ENCODE measurements at regions of chr17 and their contacts with region 1.

Region 1: GRCh38 chr17:46851029-46851741 is at the start of gene WNT9B:
- DNase-seq: no peak
- ATAC-seq: peak in 6 of 8 donors; percentile 44 to 57 (median 54)
- H3K4me3 ChIP-seq: peak within 1 kb of the TSS; percentile 1 to 56 (median 43)
- H3K27ac ChIP-seq: no peak within 1 kb of the TSS
- H3K4me1 ChIP-seq: peaks cover 0 to 12% (median 6%) of the 10 kb centered on the region in 9 donors
- H3K27me3 ChIP-seq: peaks cover 9 to 72% (median 53%) of the 10 kb centered on the region in 7 donors
- CTCF ChIP-seq: peak in 2 of 9 donors; percentile 19 to 23
- total RNA-seq, gene WNT9B: 0.18 to 2.4 (median 0.35) TPM

Region 2: DNA sequence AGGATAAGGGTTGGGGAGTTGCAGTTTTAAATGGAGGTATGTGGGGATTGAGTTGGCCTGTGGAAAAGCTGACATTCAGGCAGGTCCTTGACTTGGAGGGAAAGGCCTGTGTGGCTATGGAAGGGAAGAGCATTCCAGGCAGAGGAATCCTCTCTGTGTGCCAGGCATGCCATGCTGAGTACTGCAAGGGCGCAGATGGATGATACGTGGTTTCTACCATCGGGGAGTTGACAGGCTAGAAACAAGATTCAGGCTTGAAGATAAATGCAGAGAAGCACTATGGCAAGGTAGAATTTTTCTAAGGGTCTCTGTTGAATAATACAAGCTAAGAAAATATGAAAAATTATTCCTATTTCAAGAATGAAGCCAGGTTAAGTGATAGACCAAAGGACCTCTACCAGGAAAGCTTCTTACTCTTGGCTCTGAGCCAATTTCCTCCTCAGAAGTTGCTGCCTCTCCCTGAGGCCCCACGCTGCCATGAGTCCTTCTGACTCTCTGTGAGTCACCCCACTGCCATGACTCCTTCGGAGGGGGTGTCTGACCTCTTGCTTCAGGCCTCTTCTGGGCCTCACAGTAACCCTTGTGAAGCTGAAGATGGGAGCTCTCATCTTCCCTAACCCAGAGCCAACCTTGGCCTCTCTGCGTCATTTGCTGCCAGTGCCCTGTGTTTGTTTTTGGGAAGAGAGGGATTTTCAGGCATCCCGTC is 108.5 kb before region 1 on chr17:
- intact Hi-C with region 1: no loop called
- DNase-seq: peak in 1 of 2 donors; percentile 26
- ATAC-seq: peak; percentile 55 to 98 (median 88)
- H3K4me3 ChIP-seq: no peak overlapping the region
- H3K27ac ChIP-seq: peak overlapping the region in 6 of 10 donors; percentile 31 to 78 (median 53)
- H3K4me1 ChIP-seq: peaks cover 0 to 17% (median 5%) of the 10 kb centered on the region in 9 donors
- H3K27me3 ChIP-seq: no peaks in the 10 kb centered on the region
- CTCF ChIP-seq: no peak

Region 3: GRCh38 chr17:46894476-46895151 is 43.4 kb after region 1 on chr17:
- intact Hi-C with region 1: no loop called
- DNase-seq: no peak
- ATAC-seq: peak in 3 of 8 donors; percentile 45 to 54 (median 52)
- H3K4me3 ChIP-seq: no peak overlapping the region
- H3K27ac ChIP-seq: no peak overlapping the region
- H3K4me1 ChIP-seq: peaks cover 0 to 12% (median 0%) of the 10 kb centered on the region in 9 donors
- H3K27me3 ChIP-seq: peaks cover 0 to 53% (median 34%) of the 10 kb centered on the region in 7 donors
- CTCF ChIP-seq: no peak

Region 4: DNA sequence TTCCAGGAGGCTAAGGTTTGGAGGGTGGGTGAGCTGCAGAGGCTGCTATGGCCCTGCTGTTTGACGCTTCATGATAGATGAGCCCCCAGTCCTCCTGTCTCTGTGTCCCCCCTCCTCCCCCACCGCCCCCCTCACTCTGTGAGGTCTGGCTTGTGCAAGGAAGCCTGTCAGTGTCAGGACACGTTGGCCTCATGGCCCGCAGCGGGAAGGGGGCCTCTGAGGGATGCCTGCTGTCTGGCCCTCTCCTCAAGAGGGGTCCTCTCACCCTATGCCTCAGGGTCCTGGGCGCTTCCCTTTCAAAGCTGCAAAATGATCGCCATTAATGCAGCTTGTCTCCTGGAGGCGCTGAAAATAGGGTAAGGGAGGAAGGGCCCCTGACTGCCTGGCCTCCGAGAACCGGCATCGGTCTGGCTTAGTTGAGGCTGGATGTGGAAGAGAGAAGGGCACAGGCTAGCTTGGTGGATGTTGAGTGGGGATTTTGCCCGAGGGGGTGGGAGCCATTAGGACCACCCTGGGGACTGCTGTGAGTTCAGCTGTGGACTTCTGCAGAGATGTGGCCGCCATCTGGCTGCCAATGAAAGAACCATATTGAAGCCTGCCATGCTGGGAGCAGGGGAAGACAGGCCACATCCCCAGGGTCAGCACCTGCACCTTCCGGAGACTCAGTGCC is 57.0 kb after region 1 on chr17:
- intact Hi-C with region 1: loop called in 1 of 10 experiments (anchors 5 kb)
- DNase-seq: no peak
- ATAC-seq: no peak
- H3K4me3 ChIP-seq: no peak overlapping the region
- H3K27ac ChIP-seq: no peak overlapping the region
- H3K4me1 ChIP-seq: peaks cover 0 to 13% (median 11%) of the 10 kb centered on the region in 9 donors
- H3K27me3 ChIP-seq: peaks cover 0 to 3% (median 0%) of the 10 kb centered on the region in 7 donors
- CTCF ChIP-seq: no peak

Region 5: DNA sequence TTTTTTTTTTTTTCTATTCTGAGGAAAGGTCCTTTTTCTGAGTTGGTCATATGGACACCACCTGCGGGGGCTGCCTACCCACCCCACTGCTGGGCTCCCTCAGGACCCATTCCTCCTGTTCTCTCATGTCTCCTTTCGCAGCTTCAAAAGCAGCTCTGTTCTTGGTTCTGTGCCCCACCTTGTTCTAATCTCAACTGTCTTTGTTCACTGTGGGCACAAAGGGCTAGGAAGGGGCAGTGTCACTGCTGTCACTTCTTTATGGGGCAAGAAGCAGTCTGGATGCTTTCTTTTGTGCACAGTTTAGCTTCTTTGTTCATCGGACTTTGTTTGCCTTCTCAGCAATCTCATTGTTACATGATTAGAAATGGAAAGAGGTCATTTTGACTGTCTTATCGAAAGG is 78.9 kb after region 1 on chr17:
- intact Hi-C with region 1: loop called in 2 of 10 experiments (anchors 5 kb)
- DNase-seq: no peak
- ATAC-seq: no peak
- H3K4me3 ChIP-seq: no peak overlapping the region
- H3K27ac ChIP-seq: no peak overlapping the region
- H3K4me1 ChIP-seq: peaks cover 3 to 46% (median 30%) of the 10 kb centered on the region in 9 donors
- H3K27me3 ChIP-seq: no peaks in the 10 kb centered on the region
- CTCF ChIP-seq: no peak

Region 6: GRCh38 chr17:46935658-46936266 is 84.6 kb after region 1 on chr17:
- intact Hi-C with region 1: loop called in 3 of 10 experiments (anchors 5 to 10 kb)
- DNase-seq: peak in 1 of 2 donors; percentile 30
- ATAC-seq: peak; percentile 58 to 92 (median 80)
- H3K4me3 ChIP-seq: no peak overlapping the region
- H3K27ac ChIP-seq: peak overlapping the region in 6 of 10 donors; percentile 19 to 63 (median 36)
- H3K4me1 ChIP-seq: peaks cover 0 to 13% (median 0%) of the 10 kb centered on the region in 9 donors
- H3K27me3 ChIP-seq: no peaks in the 10 kb centered on the region
- CTCF ChIP-seq: no peak

Measured in heart right ventricle (tissue), 16 donors.